Activated B cell treated with CpG ODN at 0.5 μM for 24 hours (primary cell): ENCODE measurements at regions of chr11 and their contacts with region 1.

Region 1: GRCh38 chr11:18395735-18396504 is 1.6 kb downstream of the LDHA start:
- DNase-seq: peak; percentile 96
- ATAC-seq: peak; percentile 76
- H3K4me3 Mint-ChIP-seq: peak overlapping the region; percentile 96
- H3K27ac Mint-ChIP-seq: peak overlapping the region; percentile 91
- H3K4me1 Mint-ChIP-seq: peaks cover 18% of the 10 kb centered on the region
- H3K27me3 Mint-ChIP-seq: no peaks in the 10 kb centered on the region
- CTCF ChIP-seq: no peak

Region 2: GRCh38 chr11:16738193-16738946 is 1657.5 kb before region 1 on chr11 and contains the start of gene C11orf58:
- CTCF ChIA-PET with region 1: no interaction called
- POLR2A ChIA-PET with region 1: no interaction called
- intact Hi-C with region 1: loop called (anchors 5 kb)
- DNase-seq: peak; percentile 86
- ATAC-seq: peak; percentile 97
- H3K4me3 Mint-ChIP-seq: peak within 1 kb of the TSS; percentile 74
- H3K27ac Mint-ChIP-seq: no peak within 1 kb of the TSS
- H3K4me1 Mint-ChIP-seq: peaks cover 21% of the 10 kb centered on the region
- H3K27me3 Mint-ChIP-seq: no peaks in the 10 kb centered on the region
- CTCF ChIP-seq: no peak
- total RNA-seq, gene C11orf58: 112 and 130 TPM in 2 replicates

Region 3: DNA sequence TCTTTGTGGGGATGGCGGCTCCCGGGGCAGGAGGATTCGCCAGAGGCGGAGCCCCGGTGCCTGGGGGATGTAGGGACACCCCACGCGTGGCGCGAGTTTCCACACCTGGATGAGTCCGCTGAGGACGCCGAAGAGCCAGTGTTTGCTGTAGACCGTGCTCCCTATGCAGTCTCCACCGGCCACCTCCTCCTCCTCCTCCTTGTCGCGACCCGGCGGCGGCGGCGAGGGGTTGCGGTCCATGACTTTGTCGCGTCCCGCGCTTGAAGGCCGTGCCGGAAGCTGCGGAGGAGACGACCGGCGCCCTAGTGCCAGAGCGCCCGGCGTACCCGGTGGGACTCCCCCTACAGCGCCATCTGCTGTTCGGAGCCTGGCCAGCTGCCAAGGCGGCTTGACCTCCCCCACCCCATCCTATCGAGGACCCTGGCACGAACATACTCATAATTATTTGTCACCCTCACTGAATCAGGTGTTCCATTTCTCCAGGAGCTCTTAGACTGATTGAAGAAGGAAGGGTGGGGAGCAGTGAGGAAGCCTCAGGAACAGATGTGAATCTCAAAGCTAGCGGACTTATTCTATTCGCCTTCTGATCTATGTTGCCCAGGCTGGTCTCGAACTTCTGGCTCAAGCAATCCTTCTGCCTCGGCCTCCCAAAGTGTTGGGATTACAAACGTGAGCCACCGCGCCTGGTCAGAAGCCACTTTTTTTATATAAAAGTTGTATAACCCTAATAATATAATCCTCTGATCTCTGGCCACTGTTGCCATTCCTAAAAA is 289.9 kb before region 1 on chr11 and contains the start of gene SAAL1:
- CTCF ChIA-PET with region 1: no interaction called
- POLR2A ChIA-PET with region 1: interaction called, 8 read pairs
- intact Hi-C with region 1: loop called (anchors 2 kb)
- DNase-seq: peak; percentile 91
- ATAC-seq: peak; percentile 97
- H3K4me3 Mint-ChIP-seq: peak within 1 kb of the TSS; percentile 91
- H3K27ac Mint-ChIP-seq: peak within 1 kb of the TSS; percentile 76
- H3K4me1 Mint-ChIP-seq: peaks cover 28% of the 10 kb centered on the region
- H3K27me3 Mint-ChIP-seq: peaks cover 14% of the 10 kb centered on the region
- CTCF ChIP-seq: no peak
- total RNA-seq, gene SAAL1: 34.4 and 39.7 TPM in 2 replicates

Region 4: DNA sequence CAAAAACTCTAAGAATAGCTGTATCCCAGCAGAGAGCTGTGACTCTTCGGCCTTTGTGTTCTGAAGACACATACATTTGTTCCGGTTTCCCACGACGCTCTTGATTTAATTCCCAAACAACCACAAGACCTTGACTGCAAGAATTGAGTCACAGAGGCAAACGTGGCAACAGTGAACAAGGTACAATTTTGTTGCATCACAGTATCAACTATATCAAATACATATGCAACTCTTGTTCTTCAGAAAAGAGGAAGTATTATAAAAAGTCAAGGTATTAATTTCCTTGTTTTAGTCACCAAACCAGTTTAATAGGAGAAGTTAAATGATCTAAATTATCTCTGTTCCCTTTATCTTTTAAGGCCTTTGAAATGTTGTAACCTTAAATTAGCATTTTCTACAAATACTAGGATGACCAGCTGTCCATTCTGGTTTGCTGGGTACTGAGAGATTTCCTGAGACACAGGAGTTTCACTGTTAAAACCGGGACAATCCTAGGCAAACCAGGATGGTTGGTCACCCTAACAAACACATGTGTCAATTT is 85.0 kb before region 1 on chr11:
- CTCF ChIA-PET with region 1: no interaction called
- POLR2A ChIA-PET with region 1: interaction called, 17 read pairs
- intact Hi-C with region 1: no loop called
- DNase-seq: no peak
- ATAC-seq: peak; percentile 83
- H3K4me3 Mint-ChIP-seq: peak overlapping the region; percentile 55
- H3K27ac Mint-ChIP-seq: peak overlapping the region; percentile 76
- H3K4me1 Mint-ChIP-seq: peaks cover 38% of the 10 kb centered on the region
- H3K27me3 Mint-ChIP-seq: no peaks in the 10 kb centered on the region
- CTCF ChIP-seq: no peak

Region 5: GRCh38 chr11:18383388-18384156 is 12.3 kb before region 1 on chr11:
- CTCF ChIA-PET with region 1: interaction called, 11 read pairs
- POLR2A ChIA-PET with region 1: interaction called, 154 read pairs
- intact Hi-C with region 1: loop called (anchors 1 kb)
- DNase-seq: peak; percentile 26
- ATAC-seq: peak; percentile 93
- H3K4me3 Mint-ChIP-seq: peak overlapping the region; percentile 55
- H3K27ac Mint-ChIP-seq: peak overlapping the region; percentile 96
- H3K4me1 Mint-ChIP-seq: peaks cover 19% of the 10 kb centered on the region
- H3K27me3 Mint-ChIP-seq: no peaks in the 10 kb centered on the region
- CTCF ChIP-seq: no peak

Region 6: GRCh38 chr11:18457431-18457830 is 61.5 kb after region 1 on chr11:
- CTCF ChIA-PET with region 1: no interaction called
- POLR2A ChIA-PET with region 1: no interaction called
- intact Hi-C with region 1: no loop called
- DNase-seq: no peak
- ATAC-seq: no peak
- H3K4me3 Mint-ChIP-seq: no peak overlapping the region
- H3K27ac Mint-ChIP-seq: no peak overlapping the region
- H3K4me1 Mint-ChIP-seq: no peaks in the 10 kb centered on the region
- H3K27me3 Mint-ChIP-seq: peaks cover 3% of the 10 kb centered on the region
- CTCF ChIP-seq: no peak

Region 7: DNA sequence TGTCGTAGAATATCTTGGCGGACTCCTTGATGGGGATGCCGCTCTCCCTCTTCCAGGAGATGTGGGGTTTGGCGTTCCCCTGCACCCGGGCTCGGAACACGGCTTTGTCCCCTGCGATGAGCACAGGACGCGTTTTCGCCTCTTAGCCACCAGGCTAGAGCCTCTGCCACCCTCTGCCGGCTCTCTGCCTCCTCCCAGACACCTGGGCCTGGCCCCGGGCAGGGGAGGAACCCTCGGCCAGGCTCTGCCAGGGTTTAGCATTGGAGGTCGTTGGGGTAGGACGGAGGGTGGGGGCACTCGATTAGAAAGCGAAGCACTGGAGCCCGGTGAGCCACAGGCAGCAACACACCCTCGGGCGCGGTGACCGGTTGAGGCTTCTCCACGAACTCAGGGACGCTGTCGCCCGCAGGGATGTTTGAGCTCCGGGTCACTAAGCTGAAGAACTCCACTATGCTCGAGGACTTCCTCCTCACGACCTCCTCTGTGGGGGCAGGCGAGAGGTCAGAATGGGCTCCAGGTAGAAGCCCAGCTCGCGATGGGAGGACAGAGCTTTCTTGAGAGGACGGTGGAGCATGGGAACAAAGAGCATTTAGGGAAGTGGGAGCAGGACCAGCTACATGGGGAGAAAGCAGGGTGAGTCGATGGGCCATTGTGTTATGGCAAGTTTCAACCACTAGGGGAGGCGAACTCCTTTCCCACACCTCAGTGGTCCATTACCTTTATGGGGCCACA is 325.8 kb after region 1 on chr11:
- CTCF ChIA-PET with region 1: interaction called, 3 read pairs
- POLR2A ChIA-PET with region 1: no interaction called
- intact Hi-C with region 1: loop called (anchors 10 kb)
- DNase-seq: peak; percentile 45
- ATAC-seq: peak; percentile 56
- H3K4me3 Mint-ChIP-seq: peak overlapping the region; percentile 92
- H3K27ac Mint-ChIP-seq: peak overlapping the region; percentile 46
- H3K4me1 Mint-ChIP-seq: peaks cover 12% of the 10 kb centered on the region
- H3K27me3 Mint-ChIP-seq: no peaks in the 10 kb centered on the region
- CTCF ChIP-seq: peak; percentile 39